GM10248 (cell line): ENCODE measurements at regions of chr12 and their contacts with region 1.

Region 1: DNA sequence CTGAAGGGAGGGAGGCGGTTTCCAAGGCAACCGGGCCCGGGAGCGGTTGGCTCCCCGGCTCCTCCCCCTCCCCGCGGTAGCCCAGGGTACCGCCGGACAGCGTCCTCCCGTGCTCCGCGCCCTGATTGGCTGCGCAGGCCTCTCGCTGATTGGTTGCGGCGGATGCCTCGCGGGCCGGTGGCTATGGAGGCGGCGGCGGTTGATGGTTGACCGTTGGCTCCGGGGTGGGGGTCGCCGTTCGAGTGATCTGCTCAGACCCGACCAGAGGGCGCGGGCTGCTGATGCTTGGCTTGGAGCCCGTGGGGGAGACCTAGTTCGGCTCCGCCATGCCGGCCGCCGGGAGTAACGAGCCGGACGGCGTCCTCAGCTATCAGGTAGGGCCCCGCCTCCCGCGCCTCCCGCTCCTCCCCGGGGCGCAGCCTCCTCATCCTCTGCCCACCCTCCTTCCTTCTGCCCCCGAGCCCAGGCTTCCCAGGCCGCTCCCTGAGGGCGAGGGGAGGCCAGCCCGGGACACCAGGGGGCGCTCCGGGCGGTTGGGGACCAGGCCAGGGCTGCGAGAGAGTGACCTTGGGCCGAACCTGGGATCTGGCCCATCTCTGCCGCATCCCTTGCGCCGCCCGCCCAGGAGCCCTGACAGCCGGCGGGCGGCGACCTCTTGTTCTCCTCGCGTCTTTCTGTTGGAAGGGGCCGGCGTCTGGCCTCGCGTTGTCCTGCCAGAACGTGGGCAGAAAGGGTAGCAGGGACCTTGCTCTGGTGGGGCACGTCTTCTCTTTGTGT is at the start of gene SLC4A8:
- DNase-seq: peak; percentile 95
- CTCF ChIP-seq: peak; percentile 89

Region 2: GRCh38 chr12:51000245-51000644 is 424.6 kb before region 1 on chr12:
- CTCF ChIA-PET with region 1: no interaction called
- POLR2A ChIA-PET with region 1: no interaction called
- DNase-seq: no peak
- CTCF ChIP-seq: no peak

Region 3: DNA sequence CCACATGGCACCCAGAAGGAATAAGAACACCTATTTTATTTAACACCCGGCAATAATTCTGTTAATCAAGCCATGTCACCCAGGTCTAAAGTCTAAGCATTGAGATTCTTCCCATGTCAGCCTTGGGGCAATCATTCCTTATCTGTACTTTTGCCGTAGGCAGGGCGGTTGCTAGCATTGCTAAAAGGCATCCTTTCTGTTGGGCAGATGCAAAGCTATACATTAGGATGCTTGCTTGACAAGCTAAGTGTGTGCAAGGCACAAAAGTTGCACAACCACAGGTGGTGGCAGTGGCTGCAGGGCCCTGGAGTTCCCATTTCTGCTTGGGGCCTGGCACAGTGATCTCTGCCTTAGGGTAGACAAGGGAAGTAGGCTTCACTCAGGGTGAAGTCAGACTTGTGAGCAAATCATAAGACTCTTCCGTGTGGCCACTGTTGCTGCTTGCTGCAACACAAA is 21.1 kb before region 1 on chr12:
- CTCF ChIA-PET with region 1: interaction called, 23 read pairs
- POLR2A ChIA-PET with region 1: no interaction called
- DNase-seq: no peak
- CTCF ChIP-seq: no peak

Region 4: DNA sequence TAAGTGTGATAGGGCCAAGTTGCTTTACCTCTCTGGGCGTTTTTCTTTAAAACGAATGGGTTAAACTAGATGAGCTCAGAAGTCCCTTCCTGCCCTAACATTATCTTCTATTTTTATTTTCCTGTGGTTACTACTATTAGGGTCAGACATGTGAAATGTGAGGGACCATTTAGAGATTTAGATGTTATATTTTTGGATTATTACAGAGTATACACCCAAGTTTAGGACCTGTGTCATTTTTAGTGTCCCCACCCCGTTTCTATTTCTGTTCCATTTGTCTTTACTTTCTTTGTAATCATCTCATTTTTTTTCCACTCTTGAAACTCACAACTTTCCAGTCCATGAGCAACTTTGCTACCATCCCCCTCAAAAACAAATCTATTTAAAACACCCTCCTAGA is 56.1 kb after region 1 on chr12:
- CTCF ChIA-PET with region 1: interaction called, 10 read pairs
- POLR2A ChIA-PET with region 1: no interaction called
- DNase-seq: peak; percentile 34
- CTCF ChIP-seq: no peak

Region 5: DNA sequence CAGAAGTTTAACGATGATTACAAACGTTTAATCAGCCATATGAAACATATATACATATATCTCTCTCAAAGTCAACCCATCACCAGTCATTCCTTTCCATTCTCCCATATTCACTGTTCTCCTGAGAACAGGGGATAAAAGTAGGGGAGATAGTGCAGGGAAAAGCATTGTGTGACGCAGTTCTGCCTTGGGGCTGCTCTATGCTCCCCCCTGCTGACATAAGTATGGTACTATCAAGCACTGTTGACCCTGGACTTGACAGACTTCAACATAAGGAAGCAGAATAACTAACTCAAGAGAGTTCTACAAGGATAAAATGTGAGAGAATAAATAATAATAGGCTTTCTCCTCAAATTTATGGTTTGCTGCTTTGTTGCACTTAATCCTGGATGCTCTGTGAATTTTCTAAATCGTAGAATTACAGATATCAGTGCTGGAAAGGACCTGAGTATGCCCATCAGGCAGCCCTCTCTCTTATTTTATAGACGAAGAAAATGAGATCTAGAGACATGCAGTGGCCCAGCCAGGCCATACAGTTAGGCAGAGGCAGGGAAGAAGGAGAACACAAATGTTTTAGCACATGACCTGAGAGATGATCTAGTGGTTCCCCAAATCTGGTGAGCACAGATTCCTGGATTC is 253.4 kb after region 1 on chr12:
- CTCF ChIA-PET with region 1: interaction called, 11 read pairs
- POLR2A ChIA-PET with region 1: no interaction called
- DNase-seq: peak; percentile 53
- CTCF ChIP-seq: peak; percentile 54